HepG2 (cell line): ENCODE measurements at regions of chr19 and their contacts with region 1.

Region 1: GRCh38 chr19:15555759-15556633 is 47.7 kb downstream of the CYP4F22 start:
- DNase-seq: peak; percentile 89
- ATAC-seq: peak; percentile 91
- H3K4me3 ChIP-seq: peak overlapping the region; percentile 20 to 65 (median 32); a peak in 5 of 6 replicates
- H3K27ac ChIP-seq: no peak overlapping the region
- H3K4me1 ChIP-seq: peaks cover 35% of the 10 kb centered on the region
- H3K27me3 ChIP-seq: no peaks in the 10 kb centered on the region; a peak in 1 of 5 replicates
- CTCF ChIP-seq: peak; percentile 95
- EP300 ChIP-seq: 0 out of 4 replicates have a peak, but pooled peaks of 1 of the 2 experiments have one; percentile 47
- POLR2A ChIP-seq: no peak
- RAD21 ChIP-seq: peak; percentile 95

Region 2: GRCh38 chr19:15091901-15092753 is 463.9 kb before region 1 on chr19:
- CTCF ChIA-PET with region 1: no interaction called
- POLR2A ChIA-PET with region 1: no interaction called
- in situ Hi-C with region 1: loop called (anchors 25 kb)
- intact Hi-C with region 1: no loop called
- DNase-seq: peak; percentile 66
- ATAC-seq: peak; percentile 77
- H3K4me3 ChIP-seq: peak overlapping the region in 2 of 3 experiments; percentile 7 to 37; a peak in 3 of 6 replicates
- H3K27ac ChIP-seq: no peak overlapping the region
- H3K4me1 ChIP-seq: peaks cover 21% of the 10 kb centered on the region
- H3K27me3 ChIP-seq: peaks cover 0 to 9% of the 10 kb centered on the region in 2 experiments; a peak in 2 of 5 replicates
- CTCF ChIP-seq: peak; percentile 63
- EP300 ChIP-seq: no peak
- POLR2A ChIP-seq: no peak
- RAD21 ChIP-seq: no peak

Region 3: GRCh38 chr19:15177269-15178116 is 378.5 kb before region 1 on chr19:
- CTCF ChIA-PET with region 1: interaction called, 15 read pairs
- POLR2A ChIA-PET with region 1: interaction called, 4 read pairs
- in situ Hi-C with region 1: no loop called
- intact Hi-C with region 1: no loop called
- DNase-seq: peak; percentile 54
- ATAC-seq: peak; percentile 77
- H3K4me3 ChIP-seq: peak overlapping the region; percentile 20 to 63 (median 26); a peak in 4 of 6 replicates
- H3K27ac ChIP-seq: no peak overlapping the region
- H3K4me1 ChIP-seq: peaks cover 23% of the 10 kb centered on the region
- H3K27me3 ChIP-seq: no peaks in the 10 kb centered on the region
- CTCF ChIP-seq: peak; percentile 94
- EP300 ChIP-seq: no peak
- POLR2A ChIP-seq: no peak
- RAD21 ChIP-seq: peak; percentile 98

Region 4: DNA sequence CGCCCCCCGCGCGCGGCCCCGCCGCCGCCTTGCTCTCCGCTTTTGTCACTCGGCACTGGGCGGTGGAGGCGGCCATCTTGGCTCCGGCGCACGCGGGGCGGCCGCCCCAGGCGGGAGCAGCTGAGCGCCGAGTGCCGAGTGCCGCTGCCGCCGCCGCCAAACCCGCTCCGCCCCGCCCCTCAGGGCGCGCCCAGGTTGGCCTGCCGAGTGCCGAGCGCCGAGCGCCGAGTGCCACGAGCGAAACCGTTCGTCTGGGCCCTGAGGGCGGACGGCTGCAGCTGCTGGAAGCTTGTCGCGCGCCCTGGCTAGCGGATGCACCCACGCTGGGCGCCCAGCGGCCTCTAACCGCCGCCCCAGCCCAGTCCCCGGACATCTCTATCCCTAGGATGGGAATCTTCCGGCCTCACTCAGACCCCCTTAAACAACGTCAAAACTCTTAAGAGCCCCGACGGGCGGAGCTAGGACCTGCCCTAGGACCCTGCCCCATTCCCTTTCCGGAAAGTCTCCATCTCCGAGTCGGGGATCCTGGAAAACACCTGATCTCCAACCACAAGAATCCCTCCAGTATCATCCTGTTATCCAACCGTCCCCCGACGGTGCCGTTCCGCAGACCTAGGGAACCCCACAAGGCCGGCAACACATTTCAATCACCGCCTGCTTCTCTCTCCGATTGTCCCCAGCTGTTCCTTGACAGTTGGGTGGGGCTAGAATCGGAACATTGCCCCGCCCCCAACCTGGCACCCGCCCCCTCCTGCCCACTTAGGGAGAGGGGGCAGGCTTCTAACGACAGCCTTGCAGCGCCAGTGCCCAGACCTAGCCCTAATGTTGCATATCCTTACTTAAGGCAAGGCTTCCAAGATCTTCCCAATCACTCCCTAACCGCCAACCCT is 123.1 kb before region 1 on chr19:
- CTCF ChIA-PET with region 1: no interaction called
- POLR2A ChIA-PET with region 1: interaction called, 3 read pairs
- in situ Hi-C with region 1: loop called (anchors 10 kb)
- intact Hi-C with region 1: loop called (anchors 5 kb)
- DNase-seq: peak; percentile 65
- ATAC-seq: peak; percentile 67
- H3K4me3 ChIP-seq: peak overlapping the region; percentile 64 to 88 (median 85); a peak in 5 of 6 replicates
- H3K27ac ChIP-seq: peak overlapping the region; percentile 64
- H3K4me1 ChIP-seq: peaks cover 38% of the 10 kb centered on the region
- H3K27me3 ChIP-seq: no peaks in the 10 kb centered on the region; a peak in 2 of 5 replicates
- CTCF ChIP-seq: no peak; the same call in 1 of the 2 replicates
- EP300 ChIP-seq: no peak; a peak in 1 of 4 replicates
- POLR2A ChIP-seq: peak; percentile 58 to 64
- RAD21 ChIP-seq: peak; percentile 67

Region 5: GRCh38 chr19:15540435-15540834 is 15.6 kb before region 1 on chr19:
- CTCF ChIA-PET with region 1: interaction called, 5 read pairs
- POLR2A ChIA-PET with region 1: no interaction called
- in situ Hi-C with region 1: no loop called
- intact Hi-C with region 1: loop called (anchors 2 kb)
- DNase-seq: peak; percentile 44
- ATAC-seq: peak; percentile 91
- H3K4me3 ChIP-seq: no peak overlapping the region; a peak in 1 of 6 replicates
- H3K27ac ChIP-seq: no peak overlapping the region
- H3K4me1 ChIP-seq: peaks cover 12% of the 10 kb centered on the region
- H3K27me3 ChIP-seq: 0 out of 5 replicates have a peak, but pooled peaks cover 0 to 4% of the 10 kb centered on the region in 2 experiments
- CTCF ChIP-seq: peak; percentile 52
- EP300 ChIP-seq: no peak
- POLR2A ChIP-seq: no peak
- RAD21 ChIP-seq: no peak